Panc1 (cell line): ENCODE measurements at regions of chrX and their contacts with region 1.

Region 1: GRCh38 chrX:151753313-151754041 is 18.9 kb downstream of the CNGA2 start:
- DNase-seq: peak; percentile 22
- ATAC-seq: peak; percentile 89
- H3K4me3 ChIP-seq: no peak overlapping the region
- H3K27ac ChIP-seq: no peak overlapping the region
- H3K4me1 ChIP-seq: no peaks in the 10 kb centered on the region
- H3K27me3 ChIP-seq: no peaks in the 10 kb centered on the region; the same call in 1 of the 2 replicates
- CTCF ChIP-seq: peak; percentile 88

Region 2: GRCh38 chrX:151801993-151802392 is 48.5 kb after region 1 on chrX:
- CTCF ChIA-PET with region 1: no interaction called
- POLR2A ChIA-PET with region 1: no interaction called
- in situ Hi-C with region 1: no loop called
- intact Hi-C with region 1: no loop called
- DNase-seq: no peak
- ATAC-seq: no peak
- H3K4me3 ChIP-seq: no peak overlapping the region
- H3K27ac ChIP-seq: no peak overlapping the region
- H3K4me1 ChIP-seq: no peaks in the 10 kb centered on the region
- H3K27me3 ChIP-seq: no peaks in the 10 kb centered on the region
- CTCF ChIP-seq: peak; percentile 41

Region 3: DNA sequence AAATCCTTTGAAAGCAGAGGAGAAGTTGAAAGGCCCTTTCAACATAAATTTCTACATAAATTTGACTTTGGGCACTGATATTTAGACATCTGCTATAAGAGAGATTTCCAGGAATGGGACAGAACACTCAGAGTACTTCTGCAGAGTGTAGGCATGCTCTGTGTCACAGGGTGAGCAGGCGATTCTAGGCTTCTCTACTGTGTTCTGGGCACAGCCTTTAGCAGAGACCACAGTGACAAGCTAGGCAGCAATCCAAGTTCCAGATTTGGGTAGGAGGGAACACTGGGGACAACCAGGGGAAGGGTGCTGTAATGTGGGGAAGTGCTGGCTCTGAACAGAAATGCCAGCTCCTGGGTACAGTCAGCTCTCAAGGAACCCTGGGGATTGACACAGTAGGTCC is 378.0 kb after region 1 on chrX:
- CTCF ChIA-PET with region 1: no interaction called
- POLR2A ChIA-PET with region 1: no interaction called
- in situ Hi-C with region 1: no loop called
- intact Hi-C with region 1: loop called (anchors 10 kb)
- DNase-seq: no peak
- ATAC-seq: no peak
- H3K4me3 ChIP-seq: no peak overlapping the region
- H3K27ac ChIP-seq: no peak overlapping the region
- H3K4me1 ChIP-seq: no peaks in the 10 kb centered on the region
- H3K27me3 ChIP-seq: no peaks in the 10 kb centered on the region
- CTCF ChIP-seq: no peak

Region 4: GRCh38 chrX:152405561-152405960 is 652.1 kb after region 1 on chrX:
- CTCF ChIA-PET with region 1: no interaction called
- POLR2A ChIA-PET with region 1: no interaction called
- in situ Hi-C with region 1: no loop called
- intact Hi-C with region 1: no loop called
- DNase-seq: no peak
- ATAC-seq: no peak
- H3K4me3 ChIP-seq: no peak overlapping the region
- H3K27ac ChIP-seq: no peak overlapping the region
- H3K4me1 ChIP-seq: no peaks in the 10 kb centered on the region
- H3K27me3 ChIP-seq: no peaks in the 10 kb centered on the region
- CTCF ChIP-seq: no peak

Region 5: DNA sequence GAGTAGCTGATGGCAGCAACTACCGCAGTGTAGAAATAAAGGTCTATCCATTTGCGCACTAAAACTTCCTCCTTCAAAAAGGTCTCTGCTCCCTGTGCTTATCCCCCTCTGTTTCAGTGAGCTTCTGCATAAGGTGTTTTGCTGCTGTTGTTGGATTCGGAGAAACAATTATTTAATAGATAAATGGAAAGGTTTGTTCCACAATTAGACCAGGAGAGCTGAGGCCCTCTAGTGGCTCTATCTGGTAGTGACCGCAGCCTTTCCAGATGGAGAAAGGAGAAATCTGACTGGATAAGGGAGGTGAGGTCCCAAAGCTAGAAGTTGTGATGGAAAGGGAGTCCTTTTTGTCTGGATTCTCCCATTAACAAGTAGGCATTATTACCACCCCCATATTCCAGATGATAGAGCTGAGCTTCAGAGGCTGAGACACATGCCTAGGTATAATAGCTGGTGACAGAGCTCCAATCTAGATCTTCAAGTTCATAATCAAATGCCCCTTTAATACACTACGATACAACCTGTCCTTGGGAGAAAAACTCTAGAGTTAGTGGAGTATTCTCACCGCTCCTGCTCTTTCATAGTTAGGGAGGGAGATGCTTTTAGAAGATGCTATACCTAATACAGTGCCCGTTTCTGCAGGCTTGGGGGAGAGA is 879.1 kb after region 1 on chrX:
- CTCF ChIA-PET with region 1: interaction called, 10 read pairs
- POLR2A ChIA-PET with region 1: no interaction called
- in situ Hi-C with region 1: no loop called
- intact Hi-C with region 1: loop called (anchors 5 kb)
- DNase-seq: peak; percentile 13
- ATAC-seq: peak; percentile 72; the same call in 1 of the 2 replicates
- H3K4me3 ChIP-seq: no peak overlapping the region
- H3K27ac ChIP-seq: no peak overlapping the region
- H3K4me1 ChIP-seq: no peaks in the 10 kb centered on the region
- H3K27me3 ChIP-seq: peaks cover 6% of the 10 kb centered on the region
- CTCF ChIP-seq: peak; percentile 87